Common myeloid progenitor, CD34-positive (primary cell): ENCODE measurements at regions of chr12 and their contacts with region 1.

Region 1: DNA sequence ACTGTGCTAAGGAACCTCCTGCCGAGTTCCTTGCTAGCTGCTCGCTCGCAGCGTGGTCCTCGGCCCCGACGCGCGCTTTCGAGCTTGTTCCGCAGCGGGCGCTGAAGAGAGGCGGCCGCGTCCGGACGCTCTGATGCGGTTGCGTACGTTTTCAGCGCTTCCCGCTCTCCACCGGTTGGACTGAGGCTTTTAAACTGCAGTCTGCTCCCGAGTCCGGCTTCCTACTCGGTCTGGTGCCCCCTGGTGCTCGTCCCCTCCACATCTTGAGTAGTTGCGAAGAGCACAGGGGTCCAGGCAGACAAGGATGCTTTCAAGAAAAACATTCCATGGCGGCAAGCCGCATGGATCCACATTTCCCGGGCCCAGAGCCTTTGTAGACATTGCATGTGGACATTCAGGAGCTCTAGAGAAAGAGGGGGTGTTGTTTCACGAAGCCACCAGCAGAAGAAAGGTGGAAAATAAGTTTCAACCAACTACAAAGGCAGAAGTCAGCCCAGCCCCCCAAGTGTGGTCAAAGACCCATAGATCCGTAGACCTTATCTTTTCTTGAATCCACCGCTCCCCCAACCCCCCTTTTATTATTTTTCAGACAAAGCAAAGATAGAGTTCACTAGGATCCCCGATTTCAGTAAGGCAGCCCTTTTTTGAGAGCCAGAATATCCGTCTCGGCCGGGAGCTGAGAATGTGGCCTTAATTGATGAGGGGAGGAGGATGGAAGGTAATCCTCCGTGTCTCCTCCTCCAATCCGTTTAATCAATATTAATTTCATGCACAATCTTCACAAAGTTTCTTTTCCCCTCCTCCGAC is 984 bp upstream of the WNK1 start:
- DNase-seq: peak; percentile 98
- H3K4me3 ChIP-seq: peak overlapping the region; percentile 18 to 98 (median 77)
- H3K27ac ChIP-seq: peak overlapping the region in 1 of 2 experiments; percentile 75
- H3K4me1 ChIP-seq: peaks cover 28 to 51% (median 41%) of the 10 kb centered on the region in 4 experiments
- H3K27me3 ChIP-seq: no peaks in the 10 kb centered on the region

Region 2: GRCh38 chr12:575948-576612 is 175.3 kb before region 1 on chr12:
- CTCF ChIA-PET with region 1: interaction called, 16 read pairs
- POLR2A ChIA-PET with region 1: no interaction called
- DNase-seq: peak; percentile 66 to 86 (median 81)
- H3K4me3 ChIP-seq: peak overlapping the region in 3 of 7 experiments; percentile 34 to 62 (median 40)
- H3K27ac ChIP-seq: peak overlapping the region in 1 of 2 experiments; percentile 14
- H3K4me1 ChIP-seq: peaks cover 0 to 26% (median 16%) of the 10 kb centered on the region in 4 experiments
- H3K27me3 ChIP-seq: no peaks in the 10 kb centered on the region

Region 3: GRCh38 chr12:614411-614970 is 136.9 kb before region 1 on chr12:
- CTCF ChIA-PET with region 1: interaction called, 41 read pairs
- POLR2A ChIA-PET with region 1: interaction called, 5 read pairs
- DNase-seq: peak in 2 of 3 donors; percentile 59 to 61
- H3K4me3 ChIP-seq: no peak overlapping the region
- H3K27ac ChIP-seq: no peak overlapping the region
- H3K4me1 ChIP-seq: peaks cover 13 to 86% (median 63%) of the 10 kb centered on the region in 4 experiments
- H3K27me3 ChIP-seq: no peaks in the 10 kb centered on the region

Region 4: GRCh38 chr12:642633-643474 is 108.5 kb before region 1 on chr12:
- CTCF ChIA-PET with region 1: interaction called, 23 read pairs
- POLR2A ChIA-PET with region 1: no interaction called
- DNase-seq: peak; percentile 83 to 89 (median 83)
- H3K4me3 ChIP-seq: peak overlapping the region; percentile 51 to 82 (median 73)
- H3K27ac ChIP-seq: peak overlapping the region; percentile 46 to 82
- H3K4me1 ChIP-seq: peaks cover 9 to 75% (median 48%) of the 10 kb centered on the region in 4 experiments
- H3K27me3 ChIP-seq: no peaks in the 10 kb centered on the region

Region 5: GRCh38 chr12:724194-724855 is 27.1 kb before region 1 on chr12:
- CTCF ChIA-PET with region 1: interaction called, 47 read pairs
- POLR2A ChIA-PET with region 1: interaction called, 4 read pairs
- DNase-seq: peak; percentile 43 to 74 (median 63)
- H3K4me3 ChIP-seq: no peak overlapping the region
- H3K27ac ChIP-seq: peak overlapping the region in 1 of 2 experiments; percentile 36
- H3K4me1 ChIP-seq: peaks cover 18 to 60% (median 36%) of the 10 kb centered on the region in 4 experiments
- H3K27me3 ChIP-seq: no peaks in the 10 kb centered on the region

Region 6: GRCh38 chr12:810671-811415 is 59.4 kb after region 1 on chr12:
- CTCF ChIA-PET with region 1: interaction called, 43 read pairs
- POLR2A ChIA-PET with region 1: no interaction called
- DNase-seq: no peak
- H3K4me3 ChIP-seq: no peak overlapping the region
- H3K27ac ChIP-seq: no peak overlapping the region
- H3K4me1 ChIP-seq: peaks cover 0 to 20% (median 9%) of the 10 kb centered on the region in 4 experiments
- H3K27me3 ChIP-seq: no peaks in the 10 kb centered on the region

Region 7: GRCh38 chr12:996881-997280 is 245.5 kb after region 1 on chr12:
- CTCF ChIA-PET with region 1: no interaction called
- POLR2A ChIA-PET with region 1: no interaction called
- DNase-seq: no peak
- H3K4me3 ChIP-seq: no peak overlapping the region
- H3K27ac ChIP-seq: no peak overlapping the region
- H3K4me1 ChIP-seq: peaks cover 4 to 14% (median 10%) of the 10 kb centered on the region in 4 experiments
- H3K27me3 ChIP-seq: no peaks in the 10 kb centered on the region